ENCODE measurements at regions of chr16 and their contacts with region 1.

Region 1: DNA sequence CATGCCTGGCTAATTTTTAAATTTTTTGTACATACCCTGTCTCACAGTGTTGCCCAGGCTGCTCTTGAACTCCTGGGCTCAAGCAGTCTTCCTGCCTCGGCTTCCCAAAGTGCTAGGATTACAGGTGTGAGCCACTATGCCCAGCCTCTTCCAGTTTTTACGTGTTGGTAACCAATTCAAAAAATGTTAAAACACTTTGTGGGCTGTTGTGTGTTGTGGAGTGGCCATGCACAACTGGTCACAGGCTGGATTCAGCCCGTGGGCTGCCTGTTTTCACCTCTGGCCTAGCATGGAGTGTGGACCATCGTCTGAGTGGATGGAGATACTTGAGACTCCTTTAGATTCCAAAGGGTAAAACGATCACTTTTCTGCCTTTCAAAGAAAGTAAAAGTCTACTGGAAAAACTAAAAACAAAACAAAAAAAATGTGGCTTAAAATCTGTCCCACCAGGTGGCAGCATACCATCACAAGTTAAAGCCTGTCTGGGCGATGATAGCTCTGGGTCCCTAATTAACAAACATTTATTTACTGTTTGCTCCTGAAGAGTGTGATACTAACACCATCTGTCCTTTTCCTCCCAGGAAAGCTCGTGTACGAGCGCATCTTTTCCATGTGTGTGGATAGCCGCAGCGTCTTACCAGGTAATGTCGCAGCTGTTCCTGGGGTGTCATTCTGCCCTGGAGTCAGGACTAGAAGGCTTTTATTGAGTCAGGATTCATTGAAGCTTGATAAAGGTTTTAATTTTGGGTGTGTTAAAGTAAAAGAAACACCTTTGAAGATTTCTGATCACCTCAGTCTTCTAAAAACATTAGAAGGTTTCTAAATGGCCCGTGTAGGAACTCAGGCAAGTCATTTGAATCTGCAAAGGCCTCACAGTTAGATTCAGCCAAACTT is 45.8 kb downstream of the VPS35L start:
- DNase-seq: peak in 6 of 9 experiments; percentile 5 to 58 (median 30)
- ATAC-seq: no peak
- H3K4me3 ChIP-seq: no peak overlapping the region
- H3K4me3 Mint-ChIP-seq: no peak overlapping the region
- H3K27ac ChIP-seq: no peak overlapping the region
- H3K27ac Mint-ChIP-seq: no peak overlapping the region
- H3K4me1 ChIP-seq: no peaks in the 10 kb centered on the region
- H3K4me1 Mint-ChIP-seq: no peaks in the 10 kb centered on the region
- H3K27me3 ChIP-seq: no peaks in the 10 kb centered on the region
- H3K27me3 Mint-ChIP-seq: no peaks in the 10 kb centered on the region
- CTCF ChIP-seq: peak; percentile 54

Region 2: GRCh38 chr16:19502395-19503131 is 98.8 kb before region 1 on chr16:
- CTCF ChIA-PET with region 1: no interaction called
- POLR2A ChIA-PET with region 1: no interaction called
- intact Hi-C with region 1: no loop called
- DNase-seq: peak; percentile 27 to 73 (median 62)
- ATAC-seq: peak; percentile 38
- H3K4me3 ChIP-seq: no peak overlapping the region
- H3K4me3 Mint-ChIP-seq: no peak overlapping the region
- H3K27ac ChIP-seq: no peak overlapping the region
- H3K27ac Mint-ChIP-seq: no peak overlapping the region
- H3K4me1 ChIP-seq: no peaks in the 10 kb centered on the region
- H3K4me1 Mint-ChIP-seq: no peaks in the 10 kb centered on the region
- H3K27me3 ChIP-seq: no peaks in the 10 kb centered on the region
- H3K27me3 Mint-ChIP-seq: no peaks in the 10 kb centered on the region
- CTCF ChIP-seq: peak; percentile 70

Region 3: DNA sequence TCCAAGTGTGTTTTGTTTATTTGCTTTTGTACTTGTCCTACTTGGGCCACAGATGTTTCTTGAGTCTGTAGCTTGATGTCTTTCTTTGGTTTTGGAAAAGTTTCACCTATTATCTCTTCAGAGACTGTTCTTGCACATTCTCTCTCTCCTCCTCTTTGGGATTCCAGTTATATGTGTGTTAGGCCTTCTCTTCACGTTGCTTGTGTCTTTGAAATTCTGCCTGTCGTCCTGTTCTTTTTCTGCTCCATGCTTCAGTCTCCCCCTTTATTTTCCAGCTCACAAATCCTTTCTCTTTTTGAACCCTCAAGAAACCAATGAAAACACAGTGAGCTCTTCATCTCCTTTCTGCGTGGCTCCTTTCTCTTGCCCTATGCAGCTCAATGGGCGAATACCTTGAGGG is 38.0 kb before region 1 on chr16:
- CTCF ChIA-PET with region 1: interaction called, 4 read pairs
- POLR2A ChIA-PET with region 1: no interaction called
- intact Hi-C with region 1: loop called in 1 of 2 experiments (anchors 5 kb)
- DNase-seq: no peak
- ATAC-seq: no peak
- H3K4me3 ChIP-seq: no peak overlapping the region
- H3K4me3 Mint-ChIP-seq: no peak overlapping the region
- H3K27ac ChIP-seq: no peak overlapping the region
- H3K27ac Mint-ChIP-seq: no peak overlapping the region
- H3K4me1 ChIP-seq: no peaks in the 10 kb centered on the region
- H3K4me1 Mint-ChIP-seq: peaks cover 6% of the 10 kb centered on the region
- H3K27me3 ChIP-seq: no peaks in the 10 kb centered on the region
- H3K27me3 Mint-ChIP-seq: no peaks in the 10 kb centered on the region
- CTCF ChIP-seq: no peak

Region 4: DNA sequence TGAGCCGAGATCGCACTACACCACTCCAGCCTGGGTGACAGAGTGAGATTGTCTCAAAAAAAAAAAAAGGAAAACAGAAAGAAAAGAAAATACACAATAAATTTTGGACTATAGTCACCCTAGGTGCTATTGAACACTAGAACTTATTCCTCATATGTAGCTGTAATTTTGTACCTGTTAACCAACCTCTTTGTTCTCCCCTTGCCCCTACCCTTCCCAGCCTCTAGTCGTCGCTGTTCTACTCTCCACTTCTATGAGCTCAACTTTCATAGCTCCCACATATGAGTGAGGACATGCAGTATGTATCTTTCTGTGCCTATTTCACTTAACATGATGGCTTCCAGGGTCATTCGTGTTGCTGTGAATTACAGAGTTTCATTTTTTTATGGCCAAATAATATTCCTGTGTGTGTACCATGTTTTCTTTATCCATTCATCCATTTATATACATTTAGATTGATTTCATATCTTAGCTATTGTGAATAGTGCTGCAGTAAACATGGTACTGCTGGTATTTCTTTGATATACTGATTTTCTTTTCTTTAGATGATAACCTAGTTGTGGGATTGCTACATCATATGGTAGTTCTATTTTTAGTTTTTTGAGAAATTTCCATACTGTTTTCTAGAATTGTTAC is 17.5 kb before region 1 on chr16:
- CTCF ChIA-PET with region 1: interaction called, 11 read pairs
- POLR2A ChIA-PET with region 1: no interaction called
- intact Hi-C with region 1: no loop called
- DNase-seq: peak in 4 of 9 experiments; percentile 8 to 61 (median 32)
- ATAC-seq: peak; percentile 75
- H3K4me3 ChIP-seq: no peak overlapping the region
- H3K4me3 Mint-ChIP-seq: no peak overlapping the region
- H3K27ac ChIP-seq: no peak overlapping the region
- H3K27ac Mint-ChIP-seq: no peak overlapping the region
- H3K4me1 ChIP-seq: no peaks in the 10 kb centered on the region
- H3K4me1 Mint-ChIP-seq: no peaks in the 10 kb centered on the region
- H3K27me3 ChIP-seq: no peaks in the 10 kb centered on the region
- H3K27me3 Mint-ChIP-seq: no peaks in the 10 kb centered on the region
- CTCF ChIP-seq: peak; percentile 63

Measured in CD8-positive, alpha-beta T cell (primary cell).